Right cardiac atrium (tissue), 5 donors: ENCODE measurements at regions of chr2 and their contacts with region 1.

Region 1: DNA sequence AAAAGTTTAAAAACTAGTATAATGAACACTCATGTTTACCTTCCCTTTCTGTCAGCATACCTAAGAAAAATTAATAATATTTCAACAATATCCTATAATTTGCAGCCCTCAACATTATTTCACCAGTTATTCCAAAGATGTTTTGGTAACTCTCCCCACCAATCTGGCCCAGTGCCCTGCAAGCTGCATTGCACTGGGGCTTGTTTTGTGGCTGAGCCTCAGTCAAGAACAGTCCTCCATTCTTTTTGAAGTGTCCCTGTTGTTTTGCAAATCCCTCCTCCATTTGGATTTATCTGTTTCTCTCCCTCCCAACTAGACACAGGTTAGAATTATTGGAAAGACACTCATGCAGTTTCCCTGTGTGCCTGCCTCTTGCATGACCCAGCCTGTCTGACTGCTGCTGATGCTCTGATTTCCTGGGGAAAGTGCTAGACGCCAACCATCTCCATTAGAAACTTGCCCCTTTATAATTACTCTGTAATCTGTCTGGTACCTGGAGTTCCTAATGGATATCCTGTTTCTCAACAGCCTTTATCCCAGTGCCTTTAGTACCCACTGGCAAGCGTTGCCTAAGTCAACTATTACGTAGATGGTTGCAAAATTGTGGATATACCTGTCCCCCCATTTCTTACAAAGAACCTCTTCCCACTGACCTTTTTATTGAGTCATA is 60.2 kb downstream of the EIF5B start:
- DNase-seq: no peak
- ATAC-seq: no peak
- H3K4me3 ChIP-seq: no peak overlapping the region
- H3K27ac ChIP-seq: peak overlapping the region; percentile 39
- H3K4me1 ChIP-seq: peaks cover 2% of the 10 kb centered on the region
- H3K27me3 ChIP-seq: no peaks in the 10 kb centered on the region

Region 2: GRCh38 chr2:98936353-98937351 is 460.7 kb before region 1 on chr2:
- intact Hi-C with region 1: no loop called
- DNase-seq: no peak
- ATAC-seq: no peak
- H3K4me3 ChIP-seq: peak overlapping the region; percentile 44
- H3K27ac ChIP-seq: no peak overlapping the region
- H3K4me1 ChIP-seq: no peaks in the 10 kb centered on the region
- H3K27me3 ChIP-seq: no peaks in the 10 kb centered on the region

Region 3: GRCh38 chr2:99348173-99348572 is 49.2 kb before region 1 on chr2:
- intact Hi-C with region 1: loop called in 1 of 4 experiments (anchors 10 kb)
- DNase-seq: no peak
- ATAC-seq: no peak
- H3K4me3 ChIP-seq: no peak overlapping the region
- H3K27ac ChIP-seq: no peak overlapping the region
- H3K4me1 ChIP-seq: peaks cover 2% of the 10 kb centered on the region
- H3K27me3 ChIP-seq: no peaks in the 10 kb centered on the region

Region 4: GRCh38 chr2:99827296-99827999 is 430.1 kb after region 1 on chr2:
- intact Hi-C with region 1: no loop called
- DNase-seq: no peak
- ATAC-seq: peak in 1 of 2 donors; percentile 51
- H3K4me3 ChIP-seq: no peak overlapping the region
- H3K27ac ChIP-seq: no peak overlapping the region
- H3K4me1 ChIP-seq: no peaks in the 10 kb centered on the region
- H3K27me3 ChIP-seq: no peaks in the 10 kb centered on the region